ENCODE measurements at regions of chr5 and their contacts with region 1.

Region 1: DNA sequence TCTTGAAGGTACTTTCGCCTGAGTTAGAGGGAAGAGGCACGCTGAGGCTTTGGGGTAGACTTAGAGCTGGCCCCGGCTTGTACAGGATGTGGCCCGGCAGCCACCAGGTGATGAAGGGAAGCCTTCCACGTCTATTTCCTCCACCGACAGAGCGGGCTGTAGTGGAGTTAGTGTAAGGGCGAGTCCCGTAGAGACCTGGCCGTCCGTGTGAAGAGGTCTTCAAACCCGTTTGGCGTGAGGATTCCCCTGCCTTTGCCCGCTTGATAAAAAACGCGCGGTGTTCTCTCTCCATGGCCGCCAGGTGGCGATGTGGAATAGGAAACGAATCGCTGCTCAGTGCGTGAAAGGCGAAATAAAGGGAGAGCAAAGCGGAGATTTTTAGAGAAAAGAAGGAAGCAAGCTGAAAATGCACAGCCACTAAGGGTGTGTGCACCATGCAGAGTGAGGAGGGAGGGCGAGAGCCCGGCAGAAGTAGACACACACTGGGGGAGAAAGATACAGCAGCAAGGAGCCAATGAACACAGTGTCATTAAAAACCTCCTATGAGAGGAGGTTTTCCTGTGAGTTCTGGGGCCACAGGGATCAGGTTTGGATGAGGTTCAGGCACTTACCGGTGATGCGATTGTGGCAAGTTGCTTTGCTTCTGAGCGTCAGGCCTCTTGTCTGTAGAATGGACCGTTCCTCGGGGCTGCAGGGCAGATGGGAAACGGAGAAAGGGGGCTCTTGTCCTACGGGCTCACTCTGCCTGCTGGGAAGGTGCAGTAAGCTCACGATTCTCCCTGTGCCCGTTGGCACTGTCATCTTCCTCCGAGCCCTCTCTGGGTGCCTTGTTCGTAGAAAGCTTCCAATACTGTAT is 34.2 kb downstream of the STC2 start:
- DNase-seq: peak; percentile 74 to 85
- ATAC-seq: peak; percentile 77 to 93 (median 82)
- H3K4me3 ChIP-seq: peak overlapping the region; percentile 26
- H3K27ac ChIP-seq: no peak overlapping the region
- H3K4me1 ChIP-seq: no peaks in the 10 kb centered on the region
- H3K27me3 ChIP-seq: peaks cover 0 to 27% (median 0%) of the 10 kb centered on the region in 3 donors
- CTCF ChIP-seq: peak; percentile 91

Region 2: GRCh38 chr5:173331956-173332479 is 38.0 kb after region 1 on chr5:
- intact Hi-C with region 1: loop called (anchors 1 kb)
- DNase-seq: peak; percentile 84 to 91
- ATAC-seq: peak; percentile 47 to 75 (median 70)
- H3K4me3 ChIP-seq: no peak overlapping the region
- H3K27ac ChIP-seq: no peak overlapping the region
- H3K4me1 ChIP-seq: peaks cover 21% of the 10 kb centered on the region
- H3K27me3 ChIP-seq: peaks cover 0 to 5% (median 0%) of the 10 kb centered on the region in 3 donors
- CTCF ChIP-seq: peak; percentile 73

Region 3: GRCh38 chr5:173547579-173547978 is 253.5 kb after region 1 on chr5:
- intact Hi-C with region 1: no loop called
- DNase-seq: no peak
- ATAC-seq: no peak
- H3K4me3 ChIP-seq: no peak overlapping the region
- H3K27ac ChIP-seq: no peak overlapping the region
- H3K4me1 ChIP-seq: no peaks in the 10 kb centered on the region
- H3K27me3 ChIP-seq: no peaks in the 10 kb centered on the region
- CTCF ChIP-seq: no peak

Region 4: GRCh38 chr5:173573126-173573960 is 279.3 kb after region 1 on chr5:
- intact Hi-C with region 1: loop called (anchors 2 kb)
- DNase-seq: peak; percentile 73 to 90
- ATAC-seq: peak; percentile 94 to 99 (median 97)
- H3K4me3 ChIP-seq: peak overlapping the region; percentile 45
- H3K27ac ChIP-seq: no peak overlapping the region
- H3K4me1 ChIP-seq: no peaks in the 10 kb centered on the region
- H3K27me3 ChIP-seq: no peaks in the 10 kb centered on the region
- CTCF ChIP-seq: peak; percentile 96

Region 5: GRCh38 chr5:173984218-173984617 is 690.2 kb after region 1 on chr5:
- intact Hi-C with region 1: loop called (anchors 5 to 10 kb)
- DNase-seq: no peak
- ATAC-seq: peak; percentile 42 to 76 (median 74)
- H3K4me3 ChIP-seq: no peak overlapping the region
- H3K27ac ChIP-seq: no peak overlapping the region
- H3K4me1 ChIP-seq: no peaks in the 10 kb centered on the region
- H3K27me3 ChIP-seq: peaks cover 0 to 2% (median 0%) of the 10 kb centered on the region in 3 donors
- CTCF ChIP-seq: peak; percentile 47

Region 6: GRCh38 chr5:174311531-174312269 is 1017.7 kb after region 1 on chr5:
- intact Hi-C with region 1: loop called in 1 of 2 experiments (anchors 10 kb)
- DNase-seq: peak; percentile 69 to 82
- ATAC-seq: peak; percentile 66 to 84 (median 78)
- H3K4me3 ChIP-seq: peak overlapping the region; percentile 65
- H3K27ac ChIP-seq: no peak overlapping the region
- H3K4me1 ChIP-seq: peaks cover 7% of the 10 kb centered on the region
- H3K27me3 ChIP-seq: peaks cover 0 to 2% (median 0%) of the 10 kb centered on the region in 3 donors
- CTCF ChIP-seq: peak; percentile 88

Measured in psoas muscle (tissue), 8 donors.